CD8-positive, alpha-beta T cell (primary cell): ENCODE measurements at regions of chr10 and their contacts with region 1.

Region 1: DNA sequence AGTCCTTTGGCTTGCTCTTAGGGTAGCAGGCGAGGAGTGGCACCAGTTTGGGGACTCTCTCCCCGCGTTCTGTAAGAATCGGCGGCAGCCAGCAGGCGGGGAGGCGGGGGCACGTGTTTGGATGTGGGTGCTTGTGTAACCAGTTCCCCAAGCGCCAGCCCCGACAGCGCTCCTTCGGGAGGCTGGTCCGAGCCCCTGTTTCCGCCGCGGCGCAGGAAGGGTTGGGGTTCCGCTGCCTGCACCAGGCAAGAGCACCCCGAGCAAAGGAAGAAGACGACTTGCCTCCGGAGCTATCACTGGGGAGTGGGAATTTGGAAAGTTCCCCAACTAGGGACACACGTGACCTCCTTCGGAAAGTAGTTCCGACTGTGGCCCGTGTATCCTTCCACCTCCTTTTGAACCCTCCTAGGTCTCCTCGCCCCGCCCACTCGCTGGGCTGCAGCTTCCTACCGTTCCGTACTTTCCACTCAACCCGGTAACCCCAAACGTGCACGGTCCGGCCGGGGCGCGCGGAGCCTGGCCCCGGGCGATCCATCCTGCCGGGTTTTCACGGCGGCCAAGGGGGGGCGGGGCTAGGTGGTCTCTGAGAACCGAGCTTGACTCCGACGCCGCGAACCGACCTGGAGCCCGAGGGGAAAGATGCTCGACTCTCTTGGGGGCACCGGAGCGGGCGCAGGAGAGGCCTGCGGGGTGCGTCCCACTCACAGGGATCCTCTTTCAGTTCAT is 1.2 kb downstream of the KLLN start:
- DNase-seq: peak; percentile 86 to 98 (median 93)
- ATAC-seq: peak; percentile 66
- H3K4me3 ChIP-seq: peak overlapping the region; percentile 87 to 95
- H3K4me3 Mint-ChIP-seq: peak overlapping the region; percentile 99
- H3K27ac ChIP-seq: peak overlapping the region; percentile 69 to 85
- H3K27ac Mint-ChIP-seq: peak overlapping the region; percentile 95
- H3K4me1 ChIP-seq: peaks cover 18% of the 10 kb centered on the region
- H3K4me1 Mint-ChIP-seq: peaks cover 38% of the 10 kb centered on the region
- H3K27me3 ChIP-seq: no peaks in the 10 kb centered on the region
- H3K27me3 Mint-ChIP-seq: no peaks in the 10 kb centered on the region
- CTCF ChIP-seq: no peak

Region 2: GRCh38 chr10:87817609-87818504 is 44.3 kb before region 1 on chr10 and contains the start of gene ATAD1:
- CTCF ChIA-PET with region 1: interaction called, 3 read pairs
- POLR2A ChIA-PET with region 1: interaction called, 30 read pairs
- intact Hi-C with region 1: loop called (anchors 1 kb)
- DNase-seq: peak; percentile 79 to 96 (median 88)
- ATAC-seq: peak; percentile 84
- H3K4me3 ChIP-seq: peak within 1 kb of the TSS; percentile 83 to 87
- H3K4me3 Mint-ChIP-seq: peak within 1 kb of the TSS; percentile 94
- H3K27ac ChIP-seq: peak within 1 kb of the TSS; percentile 89 to 95
- H3K27ac Mint-ChIP-seq: peak within 1 kb of the TSS; percentile 100
- H3K4me1 ChIP-seq: peaks cover 26% of the 10 kb centered on the region
- H3K4me1 Mint-ChIP-seq: peaks cover 45% of the 10 kb centered on the region
- H3K27me3 ChIP-seq: no peaks in the 10 kb centered on the region
- H3K27me3 Mint-ChIP-seq: no peaks in the 10 kb centered on the region
- CTCF ChIP-seq: peak; percentile 20
- total RNA-seq, gene ATAD1: 36.9 to 39.0 TPM

Region 3: DNA sequence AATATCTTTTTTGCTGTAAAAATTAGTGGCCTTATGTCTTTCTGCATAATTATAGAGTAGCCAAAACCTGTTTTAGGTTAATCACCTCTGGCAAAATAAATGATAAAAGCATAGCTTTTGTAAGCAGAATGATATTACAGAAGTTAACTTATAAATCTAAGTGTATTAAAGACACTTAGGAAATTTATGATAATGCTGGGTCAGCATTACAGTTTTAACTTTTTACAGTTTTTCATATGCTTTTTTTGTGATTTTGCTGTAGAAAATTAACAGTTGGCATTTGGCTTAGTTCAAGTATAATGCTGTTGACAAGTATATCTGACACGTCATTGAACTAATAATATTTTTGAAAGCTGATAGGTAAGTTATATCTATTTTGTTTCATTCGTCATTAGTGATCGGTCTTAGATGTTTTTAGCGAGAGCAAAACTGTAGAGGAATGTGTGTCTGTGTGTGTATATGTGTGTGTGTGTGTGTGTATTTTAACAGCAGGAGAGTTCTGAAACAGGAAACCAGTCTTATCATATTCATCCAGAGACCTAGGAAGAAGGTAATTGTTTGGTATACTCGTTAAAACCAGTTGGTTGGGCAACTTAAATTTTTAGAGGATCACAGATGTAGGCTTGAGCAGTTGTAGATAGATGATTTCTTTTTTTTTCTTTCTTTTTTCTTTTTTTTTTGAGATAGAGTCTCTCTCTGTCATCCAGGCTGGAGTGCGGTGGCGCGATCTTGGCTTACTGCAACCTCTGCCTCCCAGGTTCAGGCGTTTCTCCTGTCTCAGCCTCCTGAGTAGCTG is 16.7 kb after region 1 on chr10:
- CTCF ChIA-PET with region 1: interaction called, 8 read pairs
- POLR2A ChIA-PET with region 1: interaction called, 12 read pairs
- intact Hi-C with region 1: loop called in 1 of 2 experiments (anchors 1 kb)
- DNase-seq: no peak
- ATAC-seq: no peak
- H3K4me3 ChIP-seq: no peak overlapping the region
- H3K4me3 Mint-ChIP-seq: peak overlapping the region; percentile 9
- H3K27ac ChIP-seq: no peak overlapping the region
- H3K27ac Mint-ChIP-seq: peak overlapping the region; percentile 72
- H3K4me1 ChIP-seq: peaks cover 31% of the 10 kb centered on the region
- H3K4me1 Mint-ChIP-seq: peaks cover 64% of the 10 kb centered on the region
- H3K27me3 ChIP-seq: no peaks in the 10 kb centered on the region
- H3K27me3 Mint-ChIP-seq: no peaks in the 10 kb centered on the region
- CTCF ChIP-seq: no peak

Region 4: DNA sequence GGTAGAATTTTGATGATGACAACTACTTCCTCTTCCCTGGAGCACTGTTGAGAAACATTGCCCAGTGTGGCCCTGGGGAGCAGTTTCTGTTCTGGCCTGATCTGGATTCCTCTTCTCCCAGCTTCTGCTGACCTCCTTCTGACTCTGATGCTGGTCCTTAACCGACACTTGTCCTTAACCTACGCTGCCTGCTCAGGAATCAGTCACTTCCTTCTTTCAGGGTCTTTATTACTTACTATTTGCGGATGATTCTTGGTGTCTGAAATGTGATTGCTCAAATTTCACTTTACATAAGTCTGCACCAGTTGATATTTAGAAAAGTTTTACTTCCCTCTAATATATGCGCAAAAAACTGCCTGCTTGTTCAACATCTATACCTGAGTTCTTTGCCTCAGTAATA is 165.5 kb after region 1 on chr10:
- CTCF ChIA-PET with region 1: no interaction called
- POLR2A ChIA-PET with region 1: no interaction called
- intact Hi-C with region 1: no loop called
- DNase-seq: peak in 1 of 9 experiments; percentile 11
- ATAC-seq: no peak
- H3K4me3 ChIP-seq: no peak overlapping the region
- H3K4me3 Mint-ChIP-seq: no peak overlapping the region
- H3K27ac ChIP-seq: no peak overlapping the region
- H3K27ac Mint-ChIP-seq: peak overlapping the region; percentile 58
- H3K4me1 ChIP-seq: peaks cover 14% of the 10 kb centered on the region
- H3K4me1 Mint-ChIP-seq: peaks cover 19% of the 10 kb centered on the region
- H3K27me3 ChIP-seq: no peaks in the 10 kb centered on the region
- H3K27me3 Mint-ChIP-seq: no peaks in the 10 kb centered on the region
- CTCF ChIP-seq: no peak

Region 5: GRCh38 chr10:88064608-88065382 is 202.7 kb after region 1 on chr10:
- CTCF ChIA-PET with region 1: interaction called, 4 read pairs
- POLR2A ChIA-PET with region 1: interaction called, 6 read pairs
- intact Hi-C with region 1: loop called in 1 of 2 experiments (anchors 1 kb)
- DNase-seq: peak in 4 of 9 experiments; percentile 29 to 81 (median 59)
- ATAC-seq: peak; percentile 88
- H3K4me3 ChIP-seq: no peak overlapping the region
- H3K4me3 Mint-ChIP-seq: no peak overlapping the region
- H3K27ac ChIP-seq: peak overlapping the region in 1 of 2 experiments; percentile 55
- H3K27ac Mint-ChIP-seq: peak overlapping the region; percentile 82
- H3K4me1 ChIP-seq: peaks cover 89% of the 10 kb centered on the region
- H3K4me1 Mint-ChIP-seq: peaks cover 79% of the 10 kb centered on the region
- H3K27me3 ChIP-seq: no peaks in the 10 kb centered on the region
- H3K27me3 Mint-ChIP-seq: no peaks in the 10 kb centered on the region
- CTCF ChIP-seq: no peak

Region 6: DNA sequence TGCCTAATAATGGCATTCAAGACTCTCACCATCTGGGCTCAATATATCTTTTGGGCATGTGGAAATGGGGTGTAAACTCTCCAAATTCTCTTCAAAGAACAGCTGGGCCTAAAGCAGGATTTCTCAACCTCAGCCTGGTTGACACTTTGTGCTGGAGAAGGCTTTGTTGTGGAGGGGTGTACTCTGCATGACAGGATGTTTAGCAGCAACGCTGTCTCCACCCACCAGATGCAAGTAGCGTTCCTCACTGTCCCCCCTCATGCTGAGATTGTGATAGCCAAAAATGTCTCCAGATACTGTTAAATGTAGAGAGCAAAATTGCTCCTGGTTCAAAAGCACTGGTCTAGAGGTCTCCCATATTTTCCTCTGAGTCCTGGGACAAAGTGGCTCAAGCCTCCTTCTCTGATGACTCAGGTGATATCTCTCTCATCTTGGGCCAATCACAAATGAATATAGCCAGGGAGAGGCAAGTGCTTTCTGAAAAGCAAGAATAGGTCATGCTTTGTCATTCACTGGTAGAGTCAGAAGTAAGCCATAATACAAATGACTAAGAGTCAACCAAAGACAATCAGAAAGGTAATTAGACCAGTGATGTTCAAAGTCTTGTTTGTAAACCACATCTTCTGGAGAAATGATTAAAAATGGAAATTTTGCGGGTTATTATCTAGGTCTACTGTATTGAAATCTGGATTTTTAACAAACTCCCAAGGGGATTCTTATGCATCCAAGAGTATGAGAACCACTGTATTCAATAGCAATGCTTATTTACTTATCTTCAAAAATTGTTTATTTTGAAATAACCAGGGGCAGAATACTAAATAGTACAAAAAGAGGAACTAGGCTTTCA is 332.1 kb after region 1 on chr10:
- CTCF ChIA-PET with region 1: no interaction called
- POLR2A ChIA-PET with region 1: interaction called, 4 read pairs
- intact Hi-C with region 1: loop called in 1 of 2 experiments (anchors 5 kb)
- DNase-seq: peak; percentile 22 to 83 (median 48)
- ATAC-seq: peak; percentile 96
- H3K4me3 ChIP-seq: no peak overlapping the region
- H3K4me3 Mint-ChIP-seq: peak overlapping the region; percentile 36
- H3K27ac ChIP-seq: peak overlapping the region; percentile 23 to 51
- H3K27ac Mint-ChIP-seq: peak overlapping the region; percentile 89
- H3K4me1 ChIP-seq: peaks cover 35% of the 10 kb centered on the region
- H3K4me1 Mint-ChIP-seq: peaks cover 56% of the 10 kb centered on the region
- H3K27me3 ChIP-seq: no peaks in the 10 kb centered on the region
- H3K27me3 Mint-ChIP-seq: no peaks in the 10 kb centered on the region
- CTCF ChIP-seq: no peak

Region 7: DNA sequence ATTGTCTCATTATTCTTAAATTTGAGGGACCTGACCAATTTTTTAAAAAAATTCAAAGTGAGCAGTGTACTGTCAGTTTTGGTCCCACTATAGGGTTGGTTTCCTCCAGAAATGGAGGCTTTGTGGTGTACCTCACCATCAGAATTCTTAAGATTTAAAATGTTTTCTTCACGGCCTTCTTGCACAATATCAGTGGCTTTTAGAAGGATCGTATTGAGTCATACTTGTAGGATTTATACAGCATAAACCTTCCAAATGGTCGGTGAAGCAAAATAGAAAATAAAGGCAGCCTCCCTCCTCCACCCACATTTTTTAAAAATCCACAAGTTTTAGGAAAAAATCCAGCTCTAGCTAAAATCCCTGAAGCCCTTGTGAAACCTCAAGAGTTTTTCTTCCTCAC is 594.6 kb after region 1 on chr10:
- CTCF ChIA-PET with region 1: no interaction called
- POLR2A ChIA-PET with region 1: no interaction called
- intact Hi-C with region 1: loop called (anchors 5 kb)
- DNase-seq: no peak
- ATAC-seq: no peak
- H3K4me3 ChIP-seq: no peak overlapping the region
- H3K4me3 Mint-ChIP-seq: no peak overlapping the region
- H3K27ac ChIP-seq: no peak overlapping the region
- H3K27ac Mint-ChIP-seq: no peak overlapping the region
- H3K4me1 ChIP-seq: no peaks in the 10 kb centered on the region
- H3K4me1 Mint-ChIP-seq: no peaks in the 10 kb centered on the region
- H3K27me3 ChIP-seq: no peaks in the 10 kb centered on the region
- H3K27me3 Mint-ChIP-seq: no peaks in the 10 kb centered on the region
- CTCF ChIP-seq: no peak

Region 8: GRCh38 chr10:88990384-88991160 is 1128.5 kb after region 1 on chr10 and contains the start of gene FAS:
- CTCF ChIA-PET with region 1: no interaction called
- POLR2A ChIA-PET with region 1: no interaction called
- intact Hi-C with region 1: loop called in 1 of 2 experiments (anchors 10 kb)
- DNase-seq: peak; percentile 44 to 95 (median 79)
- ATAC-seq: peak; percentile 72
- H3K4me3 ChIP-seq: peak within 1 kb of the TSS; percentile 79 to 92
- H3K4me3 Mint-ChIP-seq: peak within 1 kb of the TSS; percentile 98
- H3K27ac ChIP-seq: peak within 1 kb of the TSS; percentile 52 to 78
- H3K27ac Mint-ChIP-seq: peak within 1 kb of the TSS; percentile 97
- H3K4me1 ChIP-seq: peaks cover 41% of the 10 kb centered on the region
- H3K4me1 Mint-ChIP-seq: peaks cover 70% of the 10 kb centered on the region
- H3K27me3 ChIP-seq: no peaks in the 10 kb centered on the region
- H3K27me3 Mint-ChIP-seq: no peaks in the 10 kb centered on the region
- CTCF ChIP-seq: no peak
- total RNA-seq, gene FAS: 27.7 to 28.9 TPM